ENCODE measurements at regions of chr1 and their contacts with region 1.

Region 1: DNA sequence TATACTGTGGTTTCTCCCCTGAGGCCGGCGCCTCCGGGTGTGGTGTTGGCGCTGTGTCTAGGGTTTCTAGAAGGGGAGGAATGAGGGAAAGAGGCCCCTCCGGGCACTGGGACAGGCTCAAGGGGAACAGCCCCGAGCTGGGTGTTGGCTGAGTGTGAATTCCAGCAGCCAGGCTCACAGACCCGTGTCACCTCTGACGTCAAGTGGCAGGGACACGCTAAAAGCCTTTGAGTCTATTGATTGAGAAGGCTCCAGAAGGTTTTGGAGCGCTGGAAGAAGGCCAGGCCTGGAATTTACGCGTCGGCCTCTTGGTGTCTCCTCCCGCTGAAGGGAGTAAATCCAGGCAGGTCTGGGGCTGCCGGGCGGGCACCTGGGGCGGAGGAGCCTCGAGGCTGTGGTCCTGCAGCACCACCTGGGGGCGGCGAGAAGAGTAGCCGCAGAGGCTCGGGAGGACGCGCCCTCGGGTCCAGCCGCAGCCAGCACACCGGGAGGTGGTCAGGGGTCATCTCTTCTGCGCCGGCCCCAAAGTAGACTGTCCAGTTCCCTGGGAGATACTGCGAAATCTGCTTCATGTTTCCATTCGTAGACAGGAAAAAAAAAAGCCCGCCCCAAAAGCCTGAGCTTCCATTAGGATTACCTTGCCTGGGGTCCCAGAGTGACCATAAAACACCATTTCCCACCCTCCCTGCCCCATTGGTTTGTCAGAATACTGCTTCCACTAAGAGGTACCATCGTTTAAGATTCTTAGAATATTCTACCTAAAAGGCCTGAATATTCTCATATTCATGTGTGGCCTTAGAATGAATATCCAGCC is 61.7 kb downstream of the TLR5 start:
- DNase-seq: peak; percentile 57
- H3K4me3 ChIP-seq: peak overlapping the region in 2 of 3 experiments; percentile 10 to 35
- H3K27ac ChIP-seq: peak overlapping the region; percentile 25
- H3K4me1 ChIP-seq: no peaks in the 10 kb centered on the region
- H3K27me3 ChIP-seq: peaks cover 7% of the 10 kb centered on the region
- CTCF ChIP-seq: peak; percentile 74 to 97 (median 94)

Region 2: GRCh38 chr1:222792744-222793143 is 288.6 kb before region 1 on chr1:
- dilution Hi-C with region 1: loop called (anchors 25 kb)
- DNase-seq: no peak
- H3K4me3 ChIP-seq: no peak overlapping the region
- H3K27ac ChIP-seq: no peak overlapping the region
- H3K4me1 ChIP-seq: no peaks in the 10 kb centered on the region
- H3K27me3 ChIP-seq: no peaks in the 10 kb centered on the region
- CTCF ChIP-seq: peak; percentile 13 to 41 (median 20)

Region 3: GRCh38 chr1:223319905-223320600 is 238.7 kb after region 1 on chr1:
- dilution Hi-C with region 1: no loop called
- DNase-seq: no peak
- H3K4me3 ChIP-seq: no peak overlapping the region
- H3K27ac ChIP-seq: no peak overlapping the region
- H3K4me1 ChIP-seq: peaks cover 6% of the 10 kb centered on the region
- H3K27me3 ChIP-seq: no peaks in the 10 kb centered on the region
- CTCF ChIP-seq: no peak

Region 4: GRCh38 chr1:223331929-223332328 is 250.5 kb after region 1 on chr1:
- dilution Hi-C with region 1: no loop called
- DNase-seq: peak; percentile 25
- H3K4me3 ChIP-seq: no peak overlapping the region
- H3K27ac ChIP-seq: no peak overlapping the region
- H3K4me1 ChIP-seq: peaks cover 29% of the 10 kb centered on the region
- H3K27me3 ChIP-seq: peaks cover 6% of the 10 kb centered on the region
- CTCF ChIP-seq: no peak

Measured in keratinocyte (primary cell).